ENCODE measurements at regions of chr10 and their contacts with region 1.

Region 1: GRCh38 chr10:67697724-67698131 is 1.7 kb upstream of the CTNNA3 start:
- DNase-seq: peak; percentile 62
- H3K4me3 ChIP-seq: no peak overlapping the region
- H3K27ac ChIP-seq: no peak overlapping the region
- H3K4me1 ChIP-seq: no peaks in the 10 kb centered on the region
- H3K27me3 ChIP-seq: 0 out of 2 replicates have a peak, but pooled peaks cover 12% of the 10 kb centered on the region
- CTCF ChIP-seq: peak; percentile 68
- EP300 ChIP-seq: no peak
- RAD21 ChIP-seq: peak; percentile 66

Region 2: DNA sequence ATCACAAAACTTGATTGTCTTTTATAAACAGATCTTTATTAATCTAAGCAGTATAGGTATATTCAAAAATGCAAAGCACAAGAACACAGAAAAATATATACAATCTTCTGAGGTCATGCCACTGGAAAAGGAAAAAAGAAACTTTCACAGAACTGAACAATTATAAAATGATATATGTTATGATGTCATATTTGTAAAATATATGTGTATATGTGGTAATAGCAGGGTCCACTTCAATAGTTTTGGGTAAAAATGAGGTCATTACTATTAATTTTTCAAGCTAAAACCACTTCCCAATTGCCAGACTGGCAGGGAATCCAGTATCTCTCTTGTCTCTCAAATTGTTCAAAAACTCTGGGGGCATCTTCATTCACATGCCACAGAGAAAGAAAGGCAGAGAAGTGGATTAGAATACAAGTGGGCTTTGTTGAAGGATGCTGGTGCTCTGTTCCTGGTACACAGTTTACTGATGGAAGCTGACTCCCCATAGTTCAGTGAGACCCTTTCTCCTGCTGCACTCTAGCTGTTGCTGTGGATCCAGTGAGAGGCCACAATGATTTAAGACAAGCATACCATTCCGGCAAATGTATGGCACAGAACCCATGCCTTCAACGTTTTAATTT is 21.4 kb before region 1 on chr10:
- CTCF ChIA-PET with region 1: interaction called, 10 read pairs
- POLR2A ChIA-PET with region 1: no interaction called
- DNase-seq: no peak
- H3K4me3 ChIP-seq: no peak overlapping the region
- H3K27ac ChIP-seq: no peak overlapping the region
- H3K4me1 ChIP-seq: no peaks in the 10 kb centered on the region
- H3K27me3 ChIP-seq: no peaks in the 10 kb centered on the region; the same call in 1 of the 2 replicates
- CTCF ChIP-seq: no peak
- EP300 ChIP-seq: no peak
- RAD21 ChIP-seq: no peak

Region 3: DNA sequence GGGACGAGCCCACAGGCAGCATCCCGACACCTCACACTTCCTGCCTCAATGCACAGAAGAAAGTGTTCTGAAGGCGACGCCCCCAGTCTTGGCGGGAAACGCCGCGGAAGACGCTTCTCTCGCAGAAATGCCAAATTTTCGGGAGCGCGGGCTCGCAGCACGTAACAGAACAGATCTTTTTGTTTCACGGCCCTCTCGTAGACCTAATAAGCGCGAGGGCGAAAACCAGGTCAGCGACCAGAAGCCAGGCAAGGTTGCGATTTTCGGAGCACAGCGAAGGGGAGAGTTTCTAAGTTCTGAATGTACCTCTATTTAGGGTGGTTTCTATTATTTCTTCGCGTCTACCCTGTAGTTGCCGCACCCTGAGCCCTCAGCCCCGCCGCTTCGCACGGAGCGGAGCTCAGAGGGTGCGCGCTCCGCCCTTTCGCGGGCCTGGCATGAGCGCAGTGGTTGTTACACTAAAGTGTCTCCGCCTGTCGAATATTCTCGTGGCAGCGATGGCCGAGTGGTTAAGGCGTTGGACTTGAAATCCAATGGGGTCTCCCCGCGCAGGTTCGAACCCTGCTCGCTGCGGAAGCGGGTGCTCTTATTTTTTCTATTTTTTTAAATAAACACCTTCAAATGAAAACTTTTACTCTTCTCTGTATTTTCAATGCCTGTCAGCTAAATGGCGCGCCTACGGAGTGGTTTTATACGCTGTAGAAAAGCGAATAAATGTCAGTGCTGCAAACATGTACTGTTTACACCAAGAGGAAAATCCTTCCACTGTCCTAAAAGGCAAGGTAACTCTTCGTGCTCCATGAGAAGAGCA is 66.5 kb after region 1 on chr10:
- CTCF ChIA-PET with region 1: interaction called, 14 read pairs
- POLR2A ChIA-PET with region 1: no interaction called
- DNase-seq: peak; percentile 80
- H3K4me3 ChIP-seq: peak overlapping the region; percentile 83 to 93
- H3K27ac ChIP-seq: peak overlapping the region; percentile 58 to 92
- H3K4me1 ChIP-seq: peaks cover 0 to 6% of the 10 kb centered on the region in 2 experiments; a peak in 2 of 4 replicates
- H3K27me3 ChIP-seq: no peaks in the 10 kb centered on the region
- CTCF ChIP-seq: no peak
- EP300 ChIP-seq: peak in 1 of 2 experiments; percentile 13; a peak in 1 of 4 replicates
- RAD21 ChIP-seq: no peak

Region 4: GRCh38 chr10:67779465-67780203 is 81.9 kb after region 1 on chr10:
- CTCF ChIA-PET with region 1: interaction called, 185 read pairs
- POLR2A ChIA-PET with region 1: no interaction called
- DNase-seq: peak; percentile 61
- H3K4me3 ChIP-seq: no peak overlapping the region; a peak in 1 of 4 replicates
- H3K27ac ChIP-seq: no peak overlapping the region
- H3K4me1 ChIP-seq: no peaks in the 10 kb centered on the region
- H3K27me3 ChIP-seq: peaks cover 5% of the 10 kb centered on the region
- CTCF ChIP-seq: peak; percentile 81
- EP300 ChIP-seq: no peak
- RAD21 ChIP-seq: peak; percentile 93